PC-9 (cell line): ENCODE measurements at regions of chr15 and their contacts with region 1.

Region 1: GRCh38 chr15:44501768-44502366 is 35.1 kb upstream of the EIF3J start:
- DNase-seq: no peak
- H3K4me3 ChIP-seq: no peak overlapping the region
- H3K27ac ChIP-seq: no peak overlapping the region
- H3K4me1 ChIP-seq: no peaks in the 10 kb centered on the region
- H3K27me3 ChIP-seq: no peaks in the 10 kb centered on the region
- CTCF ChIP-seq: peak; percentile 70

Region 2: GRCh38 chr15:43872416-43873020 is 629.3 kb before region 1 on chr15:
- CTCF ChIA-PET with region 1: no interaction called
- POLR2A ChIA-PET with region 1: no interaction called
- intact Hi-C with region 1: loop called (anchors 5 kb)
- DNase-seq: peak; percentile 31 to 40
- H3K4me3 ChIP-seq: no peak overlapping the region
- H3K27ac ChIP-seq: no peak overlapping the region
- H3K4me1 ChIP-seq: no peaks in the 10 kb centered on the region
- H3K27me3 ChIP-seq: no peaks in the 10 kb centered on the region
- CTCF ChIP-seq: peak; percentile 65

Region 3: DNA sequence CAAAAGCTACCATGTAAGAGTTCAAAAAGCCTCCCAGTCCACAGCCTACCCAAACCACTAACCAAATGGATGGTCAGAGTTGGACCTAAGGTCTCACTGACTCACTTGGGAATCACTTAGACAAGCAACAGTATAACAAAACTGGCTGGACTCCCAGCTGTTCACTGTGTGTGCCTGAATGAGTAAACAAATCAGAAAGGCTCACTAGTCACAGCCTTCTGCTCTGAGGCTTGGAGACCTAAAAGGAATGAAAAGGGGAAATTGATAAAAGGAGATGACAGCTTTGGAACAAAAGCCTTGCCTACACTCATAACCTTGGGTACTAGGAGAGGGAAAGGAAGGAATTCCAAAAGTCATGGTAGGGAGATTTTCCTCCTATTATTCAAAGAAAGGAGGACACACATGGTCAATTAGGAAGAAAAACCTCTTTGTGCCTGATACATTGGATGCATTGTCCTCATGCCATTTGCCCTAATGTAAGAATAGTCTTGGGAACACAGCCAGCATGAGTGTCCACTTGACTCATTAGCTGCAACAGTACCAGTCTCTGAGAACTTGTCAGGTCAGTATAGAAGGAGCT is 399.1 kb before region 1 on chr15:
- CTCF ChIA-PET with region 1: interaction called, 17 read pairs
- POLR2A ChIA-PET with region 1: no interaction called
- intact Hi-C with region 1: no loop called
- DNase-seq: peak; percentile 43 to 89
- H3K4me3 ChIP-seq: no peak overlapping the region
- H3K27ac ChIP-seq: peak overlapping the region; percentile 78
- H3K4me1 ChIP-seq: peaks cover 32% of the 10 kb centered on the region
- H3K27me3 ChIP-seq: no peaks in the 10 kb centered on the region
- CTCF ChIP-seq: no peak

Region 4: DNA sequence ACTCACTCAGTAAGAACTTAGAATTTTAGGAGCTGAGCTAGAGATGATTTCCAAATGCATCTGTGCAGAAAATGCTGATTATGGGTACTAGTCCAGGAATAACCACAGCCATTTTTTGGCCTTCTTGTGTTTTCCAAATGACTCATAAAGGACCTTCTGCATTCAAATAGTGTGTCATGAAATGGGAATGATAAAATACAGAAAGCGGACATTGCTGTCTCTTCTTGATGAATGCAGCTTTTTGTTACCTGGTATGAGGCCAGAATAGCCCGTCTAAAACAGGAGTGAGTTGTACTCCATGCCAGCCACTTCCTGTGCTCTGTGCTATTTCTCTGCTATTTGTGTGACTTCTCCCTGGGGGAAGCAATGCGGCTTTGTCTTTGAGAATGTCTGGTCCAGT is 286.3 kb before region 1 on chr15:
- CTCF ChIA-PET with region 1: no interaction called
- POLR2A ChIA-PET with region 1: no interaction called
- intact Hi-C with region 1: loop called (anchors 10 kb)
- DNase-seq: peak; percentile 26 to 71
- H3K4me3 ChIP-seq: no peak overlapping the region
- H3K27ac ChIP-seq: no peak overlapping the region
- H3K4me1 ChIP-seq: 0 out of 2 replicates have a peak, but pooled peaks cover 4% of the 10 kb centered on the region
- H3K27me3 ChIP-seq: no peaks in the 10 kb centered on the region
- CTCF ChIP-seq: no peak

Region 5: DNA sequence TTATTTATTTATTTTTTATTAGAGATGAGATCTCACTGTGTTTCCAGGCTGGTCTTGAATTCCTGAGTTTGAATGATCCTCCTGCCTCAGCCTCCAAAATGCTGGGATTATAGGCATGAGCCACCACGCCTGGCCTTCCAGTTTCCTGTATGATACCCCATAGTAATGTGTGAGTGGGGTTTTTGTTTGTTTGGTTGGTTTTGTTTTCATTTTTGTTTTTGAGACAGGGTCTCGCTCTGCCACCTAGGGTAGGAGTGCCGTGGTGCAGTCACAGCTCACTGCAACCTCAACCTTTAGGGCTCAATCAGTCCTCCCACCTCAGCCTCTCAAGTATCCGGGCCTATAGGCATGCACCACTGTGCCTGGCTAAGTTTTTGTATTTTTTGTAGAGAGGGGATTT is 182.5 kb before region 1 on chr15:
- CTCF ChIA-PET with region 1: no interaction called
- POLR2A ChIA-PET with region 1: no interaction called
- intact Hi-C with region 1: no loop called
- DNase-seq: no peak
- H3K4me3 ChIP-seq: no peak overlapping the region
- H3K27ac ChIP-seq: no peak overlapping the region
- H3K4me1 ChIP-seq: no peaks in the 10 kb centered on the region
- H3K27me3 ChIP-seq: no peaks in the 10 kb centered on the region
- CTCF ChIP-seq: no peak